Heart right ventricle (tissue), 16 donors: ENCODE measurements at regions of chr10 and their contacts with region 1.

Region 1: DNA sequence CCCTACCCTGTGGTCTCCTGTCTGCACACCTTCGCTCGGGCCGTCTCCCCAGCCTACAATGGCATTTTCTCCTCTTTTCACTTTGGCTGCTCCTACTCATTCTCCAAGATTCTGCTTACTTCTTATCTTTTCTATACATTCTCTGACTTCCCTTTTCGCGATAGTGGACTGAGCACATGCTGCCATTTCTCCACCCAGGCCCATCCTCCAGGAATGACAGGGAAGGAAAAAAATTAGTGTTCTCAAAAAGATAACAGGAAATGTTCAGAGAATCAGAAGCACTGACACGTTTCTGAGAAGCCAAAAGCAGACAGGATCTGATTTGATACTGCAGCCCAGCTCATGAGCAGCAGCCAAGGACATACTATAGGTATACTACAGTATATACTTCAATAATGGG is 6.4 kb upstream of the ANXA11 start:
- DNase-seq: no peak
- ATAC-seq: no peak
- H3K4me3 ChIP-seq: no peak overlapping the region
- H3K27ac ChIP-seq: no peak overlapping the region
- H3K4me1 ChIP-seq: peaks cover 0 to 14% (median 8%) of the 10 kb centered on the region in 9 donors
- H3K27me3 ChIP-seq: no peaks in the 10 kb centered on the region
- CTCF ChIP-seq: no peak

Region 2: DNA sequence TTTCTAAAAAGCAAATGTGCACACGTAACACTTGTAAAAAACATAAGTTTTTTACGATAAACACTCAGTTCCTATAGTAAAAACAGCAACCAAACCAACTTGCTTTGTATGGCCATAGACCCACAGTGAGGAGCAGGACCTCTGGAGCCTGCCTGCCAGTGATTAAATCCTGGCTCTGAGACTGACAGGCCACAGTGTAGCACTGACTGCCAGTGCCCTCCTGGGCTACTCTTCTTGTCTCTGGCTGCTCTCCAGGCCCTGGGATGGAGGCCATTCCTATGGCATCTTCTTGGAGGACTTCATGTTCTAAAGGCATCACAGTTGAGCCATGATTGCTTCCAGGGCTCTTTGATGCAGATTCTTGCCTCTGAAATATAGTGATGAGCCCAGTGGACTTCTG is 156.0 kb before region 1 on chr10:
- intact Hi-C with region 1: loop called in 3 of 10 experiments (anchors 10 kb)
- DNase-seq: peak in 1 of 2 donors; percentile 30
- ATAC-seq: peak in 6 of 8 donors; percentile 27 to 76 (median 60)
- H3K4me3 ChIP-seq: no peak overlapping the region
- H3K27ac ChIP-seq: no peak overlapping the region
- H3K4me1 ChIP-seq: no peaks in the 10 kb centered on the region
- H3K27me3 ChIP-seq: no peaks in the 10 kb centered on the region
- CTCF ChIP-seq: no peak